AG04449 (cell line): ENCODE measurements at regions of chr2 and their contacts with region 1.

Region 1: DNA sequence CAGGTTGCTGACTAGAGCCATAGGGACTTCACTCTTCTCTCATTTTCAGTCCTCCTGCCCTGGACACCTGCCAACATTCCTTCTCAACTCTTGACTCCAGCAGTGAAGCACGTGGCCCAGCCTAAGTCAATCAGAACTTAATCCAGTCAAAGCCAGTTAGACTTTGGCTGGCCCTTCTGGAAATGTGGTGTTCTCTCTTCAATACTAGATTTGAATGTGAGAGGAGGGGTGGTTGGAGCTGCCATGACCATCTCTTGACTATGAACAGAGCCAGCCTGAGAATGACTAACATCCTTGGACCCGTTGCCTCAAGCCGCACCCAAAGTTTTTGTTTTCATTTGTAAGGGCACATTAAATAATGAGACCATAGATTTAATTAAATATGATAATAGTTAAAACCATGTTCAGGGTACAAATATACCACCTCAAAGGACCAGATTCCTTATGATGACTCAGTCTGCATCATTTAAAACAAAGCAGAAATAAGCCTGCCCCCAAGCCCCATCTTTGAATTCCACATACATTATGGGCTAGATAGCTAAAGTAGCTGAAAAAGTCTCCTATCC is 49.7 kb upstream of the RASGRP3 start:
- DNase-seq: no peak
- H3K4me3 ChIP-seq: no peak overlapping the region
- CTCF ChIP-seq: no peak

Region 2: GRCh38 chr2:33412920-33413319 is 13.8 kb before region 1 on chr2:
- CTCF ChIA-PET with region 1: interaction called, 13 read pairs
- POLR2A ChIA-PET with region 1: no interaction called
- DNase-seq: no peak
- H3K4me3 ChIP-seq: no peak overlapping the region
- CTCF ChIP-seq: peak; percentile 38

Region 3: DNA sequence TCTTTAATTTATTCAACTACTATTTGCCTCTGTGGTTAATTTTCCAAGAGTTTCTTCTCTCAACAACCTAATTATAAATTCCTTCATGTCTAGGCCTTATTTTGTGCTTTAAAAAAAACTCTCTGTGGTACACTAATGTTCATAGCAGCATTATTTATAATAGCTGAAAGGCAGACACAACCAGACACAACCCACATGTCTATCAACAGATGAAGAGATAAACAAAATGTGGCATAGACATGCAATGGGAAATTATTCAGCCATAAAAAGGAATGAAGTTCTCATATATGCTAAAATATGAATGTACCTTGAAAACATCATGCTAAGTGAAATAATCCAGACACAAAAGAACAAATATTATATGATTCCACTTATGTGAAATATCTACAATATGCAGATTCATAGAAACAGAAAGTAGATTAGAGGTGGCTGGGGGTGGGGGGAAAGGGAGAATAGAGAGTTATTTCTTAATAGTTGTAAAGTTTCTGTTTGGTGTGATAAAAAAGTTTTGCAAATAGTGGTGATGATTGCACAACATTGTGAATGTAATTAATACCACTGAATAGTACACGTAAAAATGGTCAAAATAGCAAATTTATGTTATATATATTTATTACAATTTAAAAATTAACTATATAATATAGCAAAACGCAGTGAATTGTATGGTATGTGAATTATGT is 21.6 kb after region 1 on chr2:
- CTCF ChIA-PET with region 1: no interaction called
- POLR2A ChIA-PET with region 1: no interaction called
- DNase-seq: no peak
- H3K4me3 ChIP-seq: no peak overlapping the region
- CTCF ChIP-seq: no peak